SK-N-SH (cell line): ENCODE measurements at regions of chr1 and their contacts with region 1.

Region 1: GRCh38 chr1:153617675-153618074 is 1.6 kb upstream of the S100A14 start:
- DNase-seq: peak; percentile 82
- H3K4me3 ChIP-seq: no peak overlapping the region
- H3K27ac ChIP-seq: no peak overlapping the region
- H3K4me1 ChIP-seq: peaks cover 0 to 4% of the 10 kb centered on the region in 2 experiments; a peak in 1 of 4 replicates
- H3K27me3 ChIP-seq: no peaks in the 10 kb centered on the region
- CTCF ChIP-seq: peak; percentile 81
- EP300 ChIP-seq: no peak
- RAD21 ChIP-seq: peak; percentile 64

Region 2: DNA sequence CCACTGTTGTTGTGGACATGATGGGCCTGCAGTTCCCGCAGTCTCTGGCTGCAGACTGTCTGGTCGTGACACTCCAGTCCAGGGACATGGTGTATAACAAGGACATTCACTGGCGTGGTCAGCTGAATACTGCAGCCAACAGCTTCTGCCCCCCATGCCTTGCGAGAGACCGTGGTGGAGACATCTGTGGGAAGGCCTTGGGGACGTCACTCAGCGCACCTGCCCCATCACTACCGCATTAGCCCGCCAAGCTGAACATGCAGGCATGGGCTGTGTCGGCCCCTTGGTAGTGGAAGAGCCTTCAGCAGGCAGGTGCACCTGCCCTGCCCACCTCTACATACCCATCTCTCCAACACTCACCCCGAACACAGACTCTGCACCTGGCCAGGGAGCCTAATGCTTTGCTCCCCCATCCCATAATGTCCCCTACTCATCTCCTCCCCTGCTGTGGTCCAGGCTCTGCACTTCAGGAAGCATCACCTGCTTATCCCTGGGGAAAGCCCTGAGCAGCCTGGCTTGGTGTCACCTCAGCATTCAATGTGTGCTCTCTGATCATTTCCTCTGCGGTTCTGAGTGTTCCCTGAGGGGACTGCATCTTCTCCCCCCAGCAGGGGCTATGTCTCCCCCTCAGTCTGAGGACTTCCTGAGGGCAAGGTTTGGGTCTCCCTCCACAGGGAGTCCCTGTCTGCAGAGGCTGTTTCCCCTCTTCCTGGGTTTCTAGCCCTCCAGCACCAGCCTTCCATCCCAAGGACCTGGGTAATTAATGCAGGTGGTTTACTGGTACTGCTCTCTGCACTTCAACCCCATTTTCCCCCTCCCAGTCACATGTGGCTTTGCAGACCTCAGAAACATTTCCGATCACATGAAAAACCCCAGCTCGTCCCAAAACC is 272.2 kb before region 1 on chr1:
- CTCF ChIA-PET with region 1: no interaction called
- POLR2A ChIA-PET with region 1: no interaction called
- DNase-seq: no peak
- H3K4me3 ChIP-seq: no peak overlapping the region
- H3K27ac ChIP-seq: no peak overlapping the region
- H3K4me1 ChIP-seq: no peaks in the 10 kb centered on the region
- H3K27me3 ChIP-seq: peaks cover 51% of the 10 kb centered on the region; the same call in 1 of the 2 replicates
- CTCF ChIP-seq: no peak
- EP300 ChIP-seq: no peak
- RAD21 ChIP-seq: no peak

Region 3: DNA sequence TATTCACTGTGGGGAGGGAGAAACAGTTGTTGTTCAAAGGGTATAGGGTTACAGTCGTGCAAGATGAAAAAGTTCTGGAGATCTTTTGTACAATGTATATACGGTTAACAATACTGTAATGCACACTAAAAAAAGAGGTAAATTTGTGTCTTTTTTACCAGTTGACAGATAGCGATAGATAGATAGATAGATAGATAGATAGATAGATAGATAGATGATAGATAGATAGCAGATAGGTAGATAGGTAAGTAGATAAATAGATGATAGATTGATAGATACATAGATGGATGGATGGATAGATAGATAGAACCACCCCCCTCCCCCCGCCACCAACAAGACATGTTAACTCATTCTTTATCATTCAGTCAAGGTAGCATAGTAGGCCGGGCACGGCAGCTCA is 14.9 kb before region 1 on chr1:
- CTCF ChIA-PET with region 1: interaction called, 18 read pairs
- POLR2A ChIA-PET with region 1: no interaction called
- DNase-seq: no peak
- H3K4me3 ChIP-seq: no peak overlapping the region
- H3K27ac ChIP-seq: no peak overlapping the region; a peak in 1 of 4 replicates
- H3K4me1 ChIP-seq: peaks cover 4 to 6% of the 10 kb centered on the region in 2 experiments; a peak in 2 of 4 replicates
- H3K27me3 ChIP-seq: no peaks in the 10 kb centered on the region
- CTCF ChIP-seq: no peak
- EP300 ChIP-seq: no peak
- RAD21 ChIP-seq: no peak

Region 4: DNA sequence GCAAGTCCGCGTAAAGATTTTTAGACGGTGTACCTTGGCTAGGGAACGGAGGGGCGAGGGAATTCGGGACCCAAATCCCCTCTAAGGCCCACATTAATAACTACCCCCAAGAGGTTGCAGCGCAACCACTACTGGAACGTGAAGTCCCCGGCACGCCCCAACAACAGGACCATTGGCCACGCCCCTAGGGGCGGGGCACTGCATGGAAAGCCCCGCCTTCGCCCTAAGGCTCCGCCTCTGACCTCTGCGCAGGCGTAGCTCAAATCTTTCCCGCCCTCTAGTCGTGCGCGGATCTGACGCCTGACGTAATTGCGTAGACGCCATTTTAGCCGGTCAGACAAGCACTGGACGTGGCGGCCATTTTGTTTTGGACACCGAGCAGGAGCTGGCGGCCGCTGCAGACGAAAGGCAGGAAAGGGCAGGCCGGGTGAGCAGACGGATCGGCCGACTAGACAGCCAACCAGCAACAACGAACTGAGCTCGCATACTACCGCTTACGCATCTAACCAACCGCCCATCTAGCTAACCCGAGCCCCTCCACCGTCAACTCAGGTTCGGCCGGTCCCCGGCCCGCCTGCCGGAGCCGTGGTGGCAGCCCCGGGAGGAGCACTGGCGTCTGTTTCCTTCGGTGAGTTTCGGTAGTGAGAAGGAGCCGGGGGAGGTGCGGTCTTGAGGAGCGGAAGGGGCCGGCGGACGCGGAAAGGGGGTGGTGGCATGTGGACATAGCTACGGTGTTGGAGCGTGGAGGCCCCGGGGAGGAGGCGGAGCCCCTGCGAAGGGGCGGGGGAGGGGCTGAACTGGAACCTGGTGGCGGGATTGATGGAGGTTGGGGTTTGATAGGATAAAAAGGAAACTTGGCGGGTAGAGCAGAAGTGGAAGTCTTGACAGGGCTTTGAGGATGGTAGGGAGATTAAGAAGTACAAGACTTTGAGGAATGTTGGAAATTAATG is 16.3 kb after region 1 on chr1 and contains the start of gene CHTOP:
- CTCF ChIA-PET with region 1: interaction called, 62 read pairs
- POLR2A ChIA-PET with region 1: interaction called, 4 read pairs
- DNase-seq: peak; percentile 94
- H3K4me3 ChIP-seq: peak within 1 kb of the TSS; percentile 91 to 97
- H3K27ac ChIP-seq: peak within 1 kb of the TSS; percentile 100
- H3K4me1 ChIP-seq: no peaks in the 10 kb centered on the region; a peak in 1 of 4 replicates
- H3K27me3 ChIP-seq: no peaks in the 10 kb centered on the region
- CTCF ChIP-seq: no peak
- EP300 ChIP-seq: no peak
- RAD21 ChIP-seq: no peak
- polyA plus RNA-seq, gene CHTOP: 76.7 and 84.9 TPM in 2 replicates

Region 5: DNA sequence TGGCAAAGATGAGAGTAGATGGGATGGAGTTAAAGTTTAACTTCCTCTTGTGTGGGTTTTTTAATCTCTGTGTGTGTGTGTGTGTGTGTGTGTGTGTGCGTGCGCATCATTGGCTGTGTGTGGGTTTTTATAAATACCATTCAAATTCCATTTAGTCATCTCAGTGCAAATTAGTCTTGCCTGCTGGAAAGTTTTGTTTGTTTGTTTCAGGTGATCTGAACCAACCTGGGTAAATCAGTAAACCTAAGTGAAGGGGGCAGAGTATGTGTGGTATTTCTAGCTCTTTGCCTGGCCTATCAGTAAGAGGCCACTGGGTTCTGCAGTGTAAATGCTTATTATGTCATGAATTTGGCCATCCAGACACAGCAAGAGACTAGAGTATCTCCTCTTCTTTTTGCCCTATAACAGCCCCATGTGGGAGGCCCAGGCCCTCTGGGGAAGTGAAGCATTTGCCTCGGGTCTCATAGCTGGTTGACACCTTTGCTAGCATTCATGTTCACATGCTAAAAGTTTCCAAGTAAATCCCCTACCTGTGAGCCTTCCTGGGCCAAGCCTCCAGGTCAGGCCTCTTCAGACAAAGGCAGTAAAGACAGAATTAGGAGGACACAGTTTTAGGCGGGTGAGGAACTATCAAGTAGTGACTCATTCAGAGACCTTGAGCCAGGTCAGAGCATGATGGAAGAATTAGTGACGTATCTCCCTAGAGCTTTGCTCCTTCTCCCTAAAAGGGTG is 124.9 kb after region 1 on chr1:
- CTCF ChIA-PET with region 1: no interaction called
- POLR2A ChIA-PET with region 1: no interaction called
- DNase-seq: no peak
- H3K4me3 ChIP-seq: no peak overlapping the region
- H3K27ac ChIP-seq: no peak overlapping the region
- H3K4me1 ChIP-seq: no peaks in the 10 kb centered on the region
- H3K27me3 ChIP-seq: no peaks in the 10 kb centered on the region
- CTCF ChIP-seq: no peak
- EP300 ChIP-seq: no peak
- RAD21 ChIP-seq: no peak

Region 6: DNA sequence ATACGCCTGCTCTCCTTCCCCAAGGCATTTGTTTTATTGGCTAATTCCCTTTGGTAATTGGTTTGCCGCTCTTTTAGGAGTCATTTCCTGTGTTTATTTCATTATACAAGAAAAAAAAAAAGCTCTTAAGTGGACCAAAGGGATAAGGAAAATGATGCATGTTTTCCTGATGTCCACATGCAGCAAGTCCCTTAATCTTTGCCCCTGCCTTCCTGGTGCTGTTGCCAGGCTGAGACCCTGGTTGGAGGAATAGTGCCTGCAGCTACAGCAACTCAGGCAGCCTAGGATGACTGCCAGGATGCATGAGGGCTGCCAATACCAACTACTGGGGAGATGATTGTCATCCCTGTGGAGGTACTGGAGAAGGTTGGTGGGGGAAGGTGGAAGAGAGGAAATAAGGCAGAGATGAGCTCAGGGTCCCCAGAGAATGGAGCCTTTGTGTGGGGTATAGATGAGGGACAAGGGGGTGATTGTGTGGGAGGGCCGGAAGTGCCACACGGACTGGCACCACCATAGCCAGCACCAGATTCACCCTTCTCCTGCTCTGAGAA is 311.2 kb after region 1 on chr1:
- CTCF ChIA-PET with region 1: no interaction called
- POLR2A ChIA-PET with region 1: no interaction called
- DNase-seq: peak; percentile 82
- H3K4me3 ChIP-seq: no peak overlapping the region
- H3K27ac ChIP-seq: peak overlapping the region in 1 of 2 experiments; percentile 88; a peak in 2 of 4 replicates
- H3K4me1 ChIP-seq: peaks cover 5 to 21% of the 10 kb centered on the region in 2 experiments; a peak in 2 of 4 replicates
- H3K27me3 ChIP-seq: no peaks in the 10 kb centered on the region
- CTCF ChIP-seq: no peak
- EP300 ChIP-seq: peak in 1 of 2 experiments; percentile 74; a peak in 1 of 4 replicates
- RAD21 ChIP-seq: no peak

Region 7: GRCh38 chr1:153951801-153952200 is 334.1 kb after region 1 on chr1:
- CTCF ChIA-PET with region 1: no interaction called
- POLR2A ChIA-PET with region 1: no interaction called
- DNase-seq: no peak
- H3K4me3 ChIP-seq: no peak overlapping the region
- H3K27ac ChIP-seq: no peak overlapping the region
- H3K4me1 ChIP-seq: peaks cover 2 to 22% of the 10 kb centered on the region in 2 experiments; a peak in 3 of 4 replicates
- H3K27me3 ChIP-seq: no peaks in the 10 kb centered on the region
- CTCF ChIP-seq: no peak
- EP300 ChIP-seq: no peak
- RAD21 ChIP-seq: no peak